ENCODE measurements at regions of chr12 and their contacts with region 1.

Region 1: GRCh38 chr12:85029456-85029855 is 6.6 kb downstream of the TSPAN19 start:
- DNase-seq: no peak
- H3K4me3 ChIP-seq: no peak overlapping the region
- H3K27ac ChIP-seq: no peak overlapping the region
- H3K4me1 ChIP-seq: no peaks in the 10 kb centered on the region
- H3K27me3 ChIP-seq: no peaks in the 10 kb centered on the region
- CTCF ChIP-seq: peak; percentile 44 to 63 (median 49)
- EP300 ChIP-seq: no peak
- POLR2A ChIP-seq: no peak

Region 2: DNA sequence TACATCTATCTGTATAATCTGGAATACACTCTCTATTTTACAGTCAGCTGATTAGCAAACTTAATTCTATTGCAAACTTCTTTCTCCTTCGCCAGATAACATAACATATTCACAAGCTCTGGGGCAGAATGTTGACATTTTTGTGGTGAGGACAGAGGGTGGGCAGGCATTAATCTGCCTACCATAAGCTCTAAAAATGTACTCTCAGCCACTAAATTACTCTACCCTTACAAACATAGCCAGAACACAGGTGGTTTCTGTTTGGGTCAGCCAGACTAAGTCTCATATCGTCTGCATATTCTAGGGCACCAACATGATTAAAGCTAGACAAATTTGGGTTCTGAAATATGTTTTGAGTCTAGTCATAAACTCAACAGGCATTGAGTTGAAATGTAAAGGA is 206.9 kb before region 1 on chr12:
- in situ Hi-C with region 1: no loop called
- intact Hi-C with region 1: no loop called
- DNase-seq: no peak
- H3K4me3 ChIP-seq: no peak overlapping the region
- H3K27ac ChIP-seq: no peak overlapping the region
- H3K4me1 ChIP-seq: no peaks in the 10 kb centered on the region
- H3K27me3 ChIP-seq: no peaks in the 10 kb centered on the region
- CTCF ChIP-seq: no peak
- EP300 ChIP-seq: no peak
- POLR2A ChIP-seq: no peak

Region 3: DNA sequence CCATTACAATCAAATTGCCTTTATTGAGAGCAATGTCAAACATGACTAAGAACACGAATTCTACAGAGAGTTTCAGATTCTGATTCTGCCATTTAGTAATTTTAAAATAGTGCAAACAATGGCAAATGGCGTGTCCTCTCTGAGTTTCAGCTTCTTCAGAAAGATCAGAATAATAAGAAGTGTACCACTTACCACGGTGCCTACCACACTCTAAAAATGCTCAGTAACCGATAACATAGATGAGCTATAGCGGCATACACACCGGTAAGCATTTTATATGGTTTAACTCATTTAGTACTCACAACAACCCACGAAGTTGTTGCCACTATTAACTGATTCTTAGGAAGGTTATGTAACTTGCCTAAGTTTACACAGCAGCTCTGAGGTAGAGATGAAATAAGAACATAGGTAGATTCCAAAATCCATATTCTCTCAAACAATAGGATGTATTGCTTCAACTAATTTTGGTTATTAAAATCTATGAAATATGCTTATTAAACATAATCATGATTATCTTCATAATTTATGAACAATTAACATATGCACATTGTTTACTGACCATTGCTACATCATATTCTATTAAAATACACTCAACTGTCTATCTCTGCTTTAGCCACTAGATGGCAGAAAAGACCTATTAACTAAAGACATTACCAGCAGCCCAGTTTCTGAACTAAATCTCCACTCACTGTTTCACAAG is 155.2 kb before region 1 on chr12:
- in situ Hi-C with region 1: loop called in 3 of 4 experiments (anchors 10 to 25 kb)
- intact Hi-C with region 1: loop called (anchors 10 kb)
- DNase-seq: no peak
- H3K4me3 ChIP-seq: no peak overlapping the region
- H3K27ac ChIP-seq: no peak overlapping the region
- H3K4me1 ChIP-seq: no peaks in the 10 kb centered on the region
- H3K27me3 ChIP-seq: no peaks in the 10 kb centered on the region
- CTCF ChIP-seq: peak; percentile 72 to 78 (median 72)
- EP300 ChIP-seq: no peak
- POLR2A ChIP-seq: no peak

Region 4: GRCh38 chr12:84889818-84890217 is 139.6 kb before region 1 on chr12:
- in situ Hi-C with region 1: loop called in 2 of 4 experiments (anchors 10 to 25 kb)
- intact Hi-C with region 1: no loop called
- DNase-seq: no peak
- H3K4me3 ChIP-seq: no peak overlapping the region
- H3K27ac ChIP-seq: no peak overlapping the region
- H3K4me1 ChIP-seq: no peaks in the 10 kb centered on the region
- H3K27me3 ChIP-seq: no peaks in the 10 kb centered on the region
- CTCF ChIP-seq: no peak
- EP300 ChIP-seq: no peak
- POLR2A ChIP-seq: no peak

Region 5: DNA sequence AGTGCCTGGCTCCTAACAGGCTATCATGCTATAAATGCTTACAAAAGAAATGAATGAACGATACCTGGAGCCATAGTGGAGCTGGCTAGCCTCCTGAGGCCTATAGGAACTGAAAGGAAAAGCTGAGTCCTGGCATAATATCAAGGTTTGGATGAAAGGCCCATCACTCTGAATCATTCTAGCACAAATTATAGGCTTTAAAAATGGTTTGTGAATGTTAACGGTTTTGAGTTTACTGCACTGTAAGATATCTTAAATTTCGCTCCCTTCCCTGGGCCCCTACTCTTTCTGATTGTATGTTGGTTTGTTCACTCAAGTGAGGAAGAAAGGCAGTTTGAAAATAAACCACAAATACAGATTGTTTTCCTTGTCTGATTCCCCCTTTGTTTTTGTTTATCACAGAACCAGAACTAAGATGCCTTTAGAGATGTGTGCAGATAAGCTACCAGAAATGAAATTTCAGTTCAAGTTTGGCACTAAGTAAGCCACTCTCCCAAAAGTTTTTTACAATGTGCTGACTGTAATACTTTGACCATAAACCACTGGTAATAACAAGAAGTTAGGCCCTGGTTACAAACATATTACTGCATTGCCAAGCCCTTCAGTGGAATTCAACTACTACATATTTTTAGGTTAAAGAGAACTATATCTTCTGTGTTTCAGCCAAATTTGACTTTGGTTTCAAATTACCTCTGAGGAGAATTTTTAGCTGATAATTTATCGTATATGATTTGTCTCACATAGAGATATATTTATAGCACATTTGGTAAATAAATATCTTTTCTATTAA is 340.1 kb after region 1 on chr12:
- in situ Hi-C with region 1: no loop called
- intact Hi-C with region 1: no loop called
- DNase-seq: no peak
- H3K4me3 ChIP-seq: no peak overlapping the region
- H3K27ac ChIP-seq: no peak overlapping the region
- H3K4me1 ChIP-seq: no peaks in the 10 kb centered on the region
- H3K27me3 ChIP-seq: no peaks in the 10 kb centered on the region
- CTCF ChIP-seq: no peak
- EP300 ChIP-seq: no peak
- POLR2A ChIP-seq: no peak

Region 6: DNA sequence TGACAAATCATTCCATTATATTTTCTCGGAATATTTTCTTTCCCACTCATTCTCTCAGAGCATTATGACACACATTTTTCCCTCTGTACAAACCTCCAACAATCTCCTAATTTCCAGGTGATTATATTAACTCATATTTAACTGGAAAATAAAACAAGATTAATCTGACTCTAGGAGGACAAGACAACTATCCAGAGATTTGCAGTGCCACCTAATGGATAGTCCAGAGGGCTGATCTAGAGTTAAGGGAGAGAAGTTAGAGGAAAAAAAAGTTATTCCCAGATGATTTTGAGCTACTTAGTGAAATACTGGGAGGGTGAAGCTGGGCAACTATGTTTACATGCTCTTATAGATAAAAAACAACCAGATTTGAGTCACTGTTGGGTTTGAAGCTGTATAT is 412.3 kb after region 1 on chr12:
- in situ Hi-C with region 1: no loop called
- intact Hi-C with region 1: no loop called
- DNase-seq: no peak
- H3K4me3 ChIP-seq: no peak overlapping the region
- H3K27ac ChIP-seq: peak overlapping the region in 2 of 4 donors; percentile 6 to 42
- H3K4me1 ChIP-seq: peaks cover 0 to 43% (median 14%) of the 10 kb centered on the region in 4 donors
- H3K27me3 ChIP-seq: no peaks in the 10 kb centered on the region
- CTCF ChIP-seq: no peak
- EP300 ChIP-seq: no peak
- POLR2A ChIP-seq: no peak

Measured in transverse colon (tissue), 4 donors.